ENCODE measurements at regions of chr15 and their contacts with region 1.

Region 1: GRCh38 chr15:51401872-51402517 is 60.5 kb downstream of the GLDN start:
- DNase-seq: no peak
- H3K4me3 ChIP-seq: no peak overlapping the region
- H3K27ac ChIP-seq: no peak overlapping the region
- H3K27me3 ChIP-seq: peaks cover 38% of the 10 kb centered on the region
- CTCF ChIP-seq: peak; percentile 80

Region 2: GRCh38 chr15:51132384-51133139 is 269.4 kb before region 1 on chr15:
- CTCF ChIA-PET with region 1: interaction called, 11 read pairs
- POLR2A ChIA-PET with region 1: no interaction called
- DNase-seq: peak; percentile 81
- H3K4me3 ChIP-seq: no peak overlapping the region
- H3K27ac ChIP-seq: peak overlapping the region; percentile 80
- H3K27me3 ChIP-seq: no peaks in the 10 kb centered on the region
- CTCF ChIP-seq: peak; percentile 98

Region 3: DNA sequence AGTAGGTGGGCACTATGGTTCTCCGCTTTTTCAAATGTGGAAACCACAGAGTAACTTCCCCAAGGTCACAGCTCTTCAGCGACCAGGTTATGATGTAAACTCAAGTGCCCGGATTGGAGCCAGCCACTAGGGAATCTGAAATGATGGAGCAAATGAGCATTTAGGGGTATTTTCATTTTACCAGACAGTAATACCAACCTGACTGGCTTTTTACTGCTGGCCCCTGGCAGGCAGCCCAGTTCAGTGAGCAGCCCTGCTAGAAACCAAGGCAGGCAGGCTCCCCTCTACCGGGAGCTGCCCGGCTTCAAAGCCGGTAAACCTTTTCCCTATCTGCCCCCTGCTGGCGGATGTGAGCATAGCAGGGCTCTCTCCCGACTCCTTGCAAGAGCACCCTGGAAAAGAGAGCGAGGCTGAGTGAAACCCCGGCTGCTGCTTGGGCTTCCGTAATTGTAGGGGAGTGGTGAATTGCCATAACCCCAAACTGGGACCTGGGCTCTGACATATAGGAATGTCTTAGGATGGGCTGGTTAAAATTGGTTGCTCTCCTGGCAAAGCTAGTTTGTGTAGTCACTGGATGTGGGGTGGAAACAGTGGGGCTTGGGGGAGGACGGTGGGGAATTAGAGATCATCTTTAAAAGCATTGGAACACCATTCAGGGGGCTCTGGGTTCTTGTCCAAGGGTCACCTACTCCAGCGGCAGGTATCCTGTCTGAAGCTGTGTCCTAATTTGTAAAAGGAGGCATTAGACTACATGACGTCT is 209.3 kb before region 1 on chr15:
- CTCF ChIA-PET with region 1: interaction called, 10 read pairs
- POLR2A ChIA-PET with region 1: no interaction called
- DNase-seq: peak; percentile 68
- H3K4me3 ChIP-seq: no peak overlapping the region
- H3K27ac ChIP-seq: no peak overlapping the region
- H3K27me3 ChIP-seq: peaks cover 26% of the 10 kb centered on the region
- CTCF ChIP-seq: peak; percentile 97

Region 4: GRCh38 chr15:51281368-51281967 is 120.5 kb before region 1 on chr15:
- CTCF ChIA-PET with region 1: interaction called, 38 read pairs
- POLR2A ChIA-PET with region 1: no interaction called
- DNase-seq: no peak
- H3K4me3 ChIP-seq: no peak overlapping the region
- H3K27ac ChIP-seq: no peak overlapping the region
- H3K27me3 ChIP-seq: peaks cover 31% of the 10 kb centered on the region
- CTCF ChIP-seq: peak; percentile 88

Region 5: GRCh38 chr15:51390966-51391432 is 11.0 kb before region 1 on chr15:
- CTCF ChIA-PET with region 1: interaction called, 16 read pairs
- POLR2A ChIA-PET with region 1: no interaction called
- DNase-seq: no peak
- H3K4me3 ChIP-seq: no peak overlapping the region
- H3K27ac ChIP-seq: no peak overlapping the region
- H3K27me3 ChIP-seq: peaks cover 25% of the 10 kb centered on the region
- CTCF ChIP-seq: no peak

Region 6: DNA sequence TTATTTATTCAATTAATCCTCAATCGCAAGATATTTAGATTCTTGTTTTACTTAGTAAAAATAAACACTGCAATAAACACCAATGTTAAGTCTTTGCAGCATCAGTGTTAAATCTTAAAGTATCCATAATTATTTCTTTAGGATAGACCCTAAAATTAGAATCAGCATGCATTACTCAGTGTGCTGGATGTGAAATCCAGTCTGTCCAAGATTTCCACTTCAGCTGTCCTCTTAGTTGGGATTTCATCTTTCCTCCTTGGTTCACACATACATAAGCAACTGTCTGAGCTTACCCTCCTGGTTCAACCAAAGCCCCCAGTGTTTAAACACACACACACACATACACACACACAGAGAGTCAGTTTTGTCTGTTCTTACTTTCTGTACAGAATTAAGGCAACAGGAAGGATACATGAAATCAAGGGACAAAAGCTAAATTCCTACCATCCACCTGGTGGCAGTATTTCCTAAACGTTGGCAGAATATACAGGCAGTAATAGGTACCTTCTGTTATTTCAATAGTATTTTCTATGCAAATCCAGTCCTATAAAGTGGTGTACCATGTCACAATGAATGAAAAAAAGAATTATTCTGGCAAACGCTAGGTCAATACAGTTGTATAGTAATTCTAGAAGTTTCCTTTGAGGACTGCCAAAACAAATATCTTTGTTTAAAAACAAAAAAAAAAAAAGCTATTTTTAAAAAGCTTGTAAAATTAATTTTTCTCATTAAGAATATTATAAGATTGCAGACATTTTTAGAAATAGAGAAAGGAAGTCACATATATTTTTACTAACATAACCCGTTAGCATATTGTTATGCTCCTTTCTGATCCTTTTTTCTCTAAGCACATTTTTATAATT is 247.9 kb after region 1 on chr15:
- CTCF ChIA-PET with region 1: no interaction called
- POLR2A ChIA-PET with region 1: no interaction called
- DNase-seq: peak; percentile 50
- H3K4me3 ChIP-seq: no peak overlapping the region
- H3K27ac ChIP-seq: no peak overlapping the region
- H3K27me3 ChIP-seq: peaks cover 4% of the 10 kb centered on the region
- CTCF ChIP-seq: peak; percentile 83

Measured in AG04450 (cell line).